ENCODE measurements at regions of chr10 and their contacts with region 1.

Region 1: GRCh38 chr10:61981402-61981841 is 79.9 kb downstream of the ARID5B start:
- DNase-seq: no peak
- ATAC-seq: no peak
- H3K4me3 ChIP-seq: no peak overlapping the region
- H3K27ac ChIP-seq: no peak overlapping the region
- H3K4me1 ChIP-seq: peaks cover 0 to 5% of the 10 kb centered on the region in 2 donors
- H3K27me3 ChIP-seq: no peaks in the 10 kb centered on the region
- CTCF ChIP-seq: no peak
- POLR2A ChIP-seq: no peak

Region 2: GRCh38 chr10:61943674-61944410 is 37.6 kb before region 1 on chr10:
- in situ Hi-C with region 1: no loop called
- intact Hi-C with region 1: loop called (anchors 5 kb)
- DNase-seq: no peak
- ATAC-seq: peak in 1 of 2 donors; percentile 56
- H3K4me3 ChIP-seq: peak overlapping the region in 2 of 4 donors; percentile 4 to 8
- H3K27ac ChIP-seq: peak overlapping the region; percentile 55 to 75 (median 64)
- H3K4me1 ChIP-seq: peaks cover 10 to 16% of the 10 kb centered on the region in 2 donors
- H3K27me3 ChIP-seq: no peaks in the 10 kb centered on the region
- CTCF ChIP-seq: no peak
- POLR2A ChIP-seq: no peak

Region 3: GRCh38 chr10:62025901-62026879 is 44.8 kb after region 1 on chr10:
- in situ Hi-C with region 1: no loop called
- intact Hi-C with region 1: loop called (anchors 1 kb)
- DNase-seq: no peak
- ATAC-seq: no peak
- H3K4me3 ChIP-seq: no peak overlapping the region
- H3K27ac ChIP-seq: no peak overlapping the region
- H3K4me1 ChIP-seq: peaks cover 0 to 3% of the 10 kb centered on the region in 2 donors
- H3K27me3 ChIP-seq: no peaks in the 10 kb centered on the region
- CTCF ChIP-seq: no peak
- POLR2A ChIP-seq: no peak

Region 4: GRCh38 chr10:62038609-62039190 is 57.3 kb after region 1 on chr10:
- in situ Hi-C with region 1: no loop called
- intact Hi-C with region 1: no loop called
- DNase-seq: peak; percentile 48 to 65
- ATAC-seq: peak; percentile 73 to 85
- H3K4me3 ChIP-seq: peak overlapping the region in 3 of 4 donors; percentile 4 to 43 (median 27)
- H3K27ac ChIP-seq: peak overlapping the region in 2 of 4 donors; percentile 1 to 50
- H3K4me1 ChIP-seq: peaks cover 21 to 39% of the 10 kb centered on the region in 2 donors
- H3K27me3 ChIP-seq: no peaks in the 10 kb centered on the region
- CTCF ChIP-seq: peak; percentile 80 to 92 (median 89)
- POLR2A ChIP-seq: no peak

Region 5: DNA sequence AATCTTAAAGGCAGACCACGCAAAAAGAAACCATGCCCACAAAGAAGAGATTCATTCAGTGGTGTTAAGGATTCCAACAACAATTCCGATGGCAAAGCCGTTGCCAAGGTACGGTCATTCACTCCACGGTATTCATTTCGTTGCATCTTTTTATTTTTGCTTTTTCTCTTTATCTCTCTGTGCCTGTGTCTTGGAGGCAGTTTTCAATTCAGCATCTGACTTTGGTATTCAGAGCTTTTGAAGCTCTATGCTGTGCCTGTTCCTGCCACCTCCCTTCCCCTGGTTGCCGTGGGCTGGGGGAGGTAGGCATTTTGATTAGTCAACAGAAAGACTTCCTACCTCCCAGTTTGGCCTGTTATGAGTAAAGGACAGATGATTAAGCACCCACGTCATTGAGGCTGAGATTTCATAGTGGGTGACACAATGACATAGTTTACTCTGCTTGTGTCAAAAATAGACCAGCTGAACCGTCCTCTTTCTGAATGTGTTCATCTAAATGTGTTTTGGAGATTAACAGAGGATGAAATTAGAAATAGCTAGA is 69.5 kb after region 1 on chr10:
- in situ Hi-C with region 1: no loop called
- intact Hi-C with region 1: no loop called
- DNase-seq: peak; percentile 80 to 87
- ATAC-seq: peak; percentile 62 to 70
- H3K4me3 ChIP-seq: peak overlapping the region; percentile 70 to 79 (median 74)
- H3K27ac ChIP-seq: peak overlapping the region; percentile 95 to 99 (median 96)
- H3K4me1 ChIP-seq: peaks cover 35 to 64% of the 10 kb centered on the region in 2 donors
- H3K27me3 ChIP-seq: no peaks in the 10 kb centered on the region
- CTCF ChIP-seq: no peak
- POLR2A ChIP-seq: peak; percentile 81 to 94